Panc1 (cell line): ENCODE measurements at regions of chr14 and their contacts with region 1.

Region 1: DNA sequence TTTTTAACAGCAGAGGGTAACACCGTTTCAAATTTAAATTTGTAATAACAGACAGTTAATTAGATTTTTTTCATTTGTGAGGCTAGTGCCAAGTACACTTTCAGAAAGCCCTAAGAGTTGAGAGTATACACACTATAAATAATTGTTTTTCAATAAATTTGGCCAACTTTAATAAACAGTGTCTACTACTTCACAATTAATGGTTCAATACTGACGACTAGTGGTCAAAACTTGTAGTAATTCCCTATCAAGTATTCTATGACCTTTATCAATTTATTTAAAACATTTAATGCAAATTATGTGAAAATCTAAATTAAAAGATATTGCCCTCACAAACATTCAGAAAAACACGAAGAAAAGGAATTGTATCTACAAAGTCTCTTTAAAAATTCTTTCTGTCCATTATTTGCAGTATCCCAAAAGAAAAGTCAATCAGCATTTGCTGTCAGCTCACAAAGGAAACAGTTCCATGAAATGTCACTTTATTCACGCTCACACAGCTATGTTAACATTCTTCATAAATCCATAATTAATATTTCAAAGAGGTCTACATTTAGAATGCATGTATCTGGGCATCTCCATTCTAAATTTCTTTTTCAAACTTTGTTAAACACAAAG is 91.2 kb downstream of the CEP128 start:
- DNase-seq: no peak
- ATAC-seq: no peak
- H3K4me3 ChIP-seq: no peak overlapping the region
- H3K27ac ChIP-seq: no peak overlapping the region
- H3K4me1 ChIP-seq: no peaks in the 10 kb centered on the region
- H3K27me3 ChIP-seq: no peaks in the 10 kb centered on the region
- CTCF ChIP-seq: peak; percentile 34; the same call in 1 of the 2 replicates

Region 2: GRCh38 chr14:78959674-78960264 is 1890.5 kb before region 1 on chr14:
- CTCF ChIA-PET with region 1: no interaction called
- POLR2A ChIA-PET with region 1: no interaction called
- in situ Hi-C with region 1: no loop called
- intact Hi-C with region 1: loop called (anchors 10 kb)
- DNase-seq: peak; percentile 42
- ATAC-seq: peak; percentile 79; the same call in 1 of the 2 replicates
- H3K4me3 ChIP-seq: no peak overlapping the region; a peak in 1 of 4 replicates
- H3K27ac ChIP-seq: no peak overlapping the region
- H3K4me1 ChIP-seq: no peaks in the 10 kb centered on the region
- H3K27me3 ChIP-seq: no peaks in the 10 kb centered on the region
- CTCF ChIP-seq: peak; percentile 81

Region 3: DNA sequence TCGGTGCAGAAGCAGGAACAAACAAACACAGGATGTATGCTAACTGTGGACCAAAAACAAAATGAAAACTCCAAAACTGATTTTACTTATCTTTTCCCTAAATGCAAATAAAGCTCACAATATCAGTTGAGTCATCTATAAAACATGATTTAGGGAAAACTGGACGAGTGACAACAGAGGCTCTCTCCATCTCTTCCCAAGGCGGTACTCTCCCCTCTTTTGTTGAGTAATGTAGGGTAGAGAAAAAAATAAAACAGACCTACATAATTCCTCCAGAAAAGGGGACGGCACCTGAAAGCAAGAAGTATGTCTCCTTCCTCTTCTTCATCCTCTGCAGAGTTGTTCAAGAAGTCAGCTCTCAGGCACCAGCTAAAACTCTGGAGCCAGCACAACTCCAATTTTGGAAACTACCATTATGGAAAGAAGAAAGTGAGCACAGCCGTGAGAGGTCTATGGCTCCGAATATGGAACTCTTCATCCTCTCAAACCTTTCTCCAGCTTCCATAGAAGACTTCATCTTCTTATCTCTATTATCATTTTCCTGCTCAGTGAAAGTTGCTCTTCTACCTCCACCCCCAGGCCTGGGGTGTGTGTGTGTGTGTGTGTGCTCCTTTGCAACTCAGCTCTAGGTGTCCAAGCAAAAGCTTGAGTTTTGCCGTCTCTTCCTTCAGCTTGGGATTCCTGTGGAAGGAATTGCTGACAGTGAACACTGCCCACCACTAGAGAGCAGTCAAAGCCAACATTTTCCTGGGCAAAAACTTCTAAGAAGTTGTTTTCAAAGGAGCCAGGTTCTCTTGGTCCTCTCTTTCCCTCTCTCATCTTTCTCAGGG is 794.4 kb before region 1 on chr14:
- CTCF ChIA-PET with region 1: no interaction called
- POLR2A ChIA-PET with region 1: no interaction called
- in situ Hi-C with region 1: no loop called
- intact Hi-C with region 1: loop called (anchors 2 kb)
- DNase-seq: peak; percentile 18
- ATAC-seq: peak; percentile 63; the same call in 1 of the 2 replicates
- H3K4me3 ChIP-seq: no peak overlapping the region
- H3K27ac ChIP-seq: no peak overlapping the region
- H3K4me1 ChIP-seq: no peaks in the 10 kb centered on the region
- H3K27me3 ChIP-seq: no peaks in the 10 kb centered on the region
- CTCF ChIP-seq: peak; percentile 71

Region 4: DNA sequence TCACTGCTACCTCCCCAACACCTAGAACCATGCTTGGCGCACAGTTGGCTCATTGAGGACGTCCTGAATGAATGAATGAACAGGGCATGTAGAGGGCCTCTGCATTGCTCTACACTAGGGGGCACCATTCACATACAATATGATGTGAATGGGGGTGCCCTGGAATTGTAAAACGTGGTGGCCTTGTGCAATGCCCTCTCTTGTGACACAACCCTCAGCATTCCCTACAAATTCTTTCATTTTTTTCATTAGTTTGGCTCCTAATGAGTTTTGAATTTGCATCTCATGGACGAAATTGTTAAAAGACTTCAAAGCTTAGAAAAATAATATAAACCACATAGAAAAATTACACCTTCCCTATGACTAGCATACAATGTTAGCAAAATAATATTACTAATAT is 636.7 kb before region 1 on chr14:
- CTCF ChIA-PET with region 1: no interaction called
- POLR2A ChIA-PET with region 1: no interaction called
- in situ Hi-C with region 1: no loop called
- intact Hi-C with region 1: loop called (anchors 2 kb)
- DNase-seq: no peak
- ATAC-seq: no peak
- H3K4me3 ChIP-seq: no peak overlapping the region
- H3K27ac ChIP-seq: no peak overlapping the region
- H3K4me1 ChIP-seq: no peaks in the 10 kb centered on the region
- H3K27me3 ChIP-seq: no peaks in the 10 kb centered on the region
- CTCF ChIP-seq: peak; percentile 57